Heart left ventricle (tissue), 16 donors: ENCODE measurements at regions of chr1 and their contacts with region 1.

Region 1: DNA sequence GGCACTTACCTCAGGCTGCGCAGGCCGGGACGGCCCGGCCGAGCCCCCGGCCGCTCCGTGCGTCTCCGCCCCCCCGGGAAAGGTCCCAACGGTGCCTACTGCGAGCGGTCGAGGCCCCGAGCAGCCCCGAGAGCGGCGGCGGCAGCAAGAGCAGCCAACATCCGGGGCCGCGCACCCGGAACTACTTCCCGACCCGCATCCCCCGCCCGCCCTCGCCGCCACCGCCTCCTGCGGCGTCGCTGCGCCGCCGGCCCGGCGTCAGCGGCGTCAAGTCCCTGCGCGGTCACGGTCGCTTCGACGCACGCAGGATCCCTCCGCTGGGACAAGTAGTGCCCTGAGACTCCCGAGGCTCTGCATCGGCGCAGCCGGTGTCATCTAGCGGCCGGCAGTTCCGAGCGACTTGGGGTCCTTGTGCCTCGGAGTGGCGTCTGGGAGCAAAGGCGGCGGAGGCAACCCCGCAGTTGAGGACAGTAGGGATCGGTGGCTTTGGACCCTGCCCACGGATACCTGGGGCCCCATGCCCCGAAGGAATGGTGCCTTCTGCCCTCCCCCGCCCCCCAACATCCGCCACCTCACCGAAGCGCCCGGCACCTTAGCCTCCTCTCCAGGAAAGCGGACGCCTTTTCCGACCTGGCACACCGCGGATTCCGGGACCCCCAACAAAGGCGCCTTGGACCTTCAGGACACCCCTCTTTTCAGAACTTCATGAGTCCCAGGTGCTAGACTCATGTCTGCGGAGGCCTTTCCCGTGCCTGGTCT is at the start of gene FOXJ3:
- DNase-seq: peak; percentile 94 to 97 (median 95)
- ATAC-seq: peak; percentile 74 to 96 (median 91)
- H3K4me3 ChIP-seq: peak within 1 kb of the TSS; percentile 72 to 99 (median 94)
- H3K27ac ChIP-seq: peak within 1 kb of the TSS; percentile 83 to 98 (median 95)
- H3K4me1 ChIP-seq: peaks cover 3 to 57% (median 30%) of the 10 kb centered on the region in 12 donors
- H3K27me3 ChIP-seq: no peaks in the 10 kb centered on the region
- CTCF ChIP-seq: no peak
- POLR2A ChIP-seq: peak in 1 of 2 donors; percentile 61
- total RNA-seq, gene FOXJ3: 33.4 to 48.8 (median 42.3) TPM

Region 2: GRCh38 chr1:42173155-42173933 is 161.9 kb before region 1 on chr1:
- intact Hi-C with region 1: loop called in 9 of 10 experiments (anchors 2 to 10 kb)
- DNase-seq: peak; percentile 58 to 80 (median 70)
- ATAC-seq: peak; percentile 42 to 63 (median 54)
- H3K4me3 ChIP-seq: no peak overlapping the region
- H3K27ac ChIP-seq: peak overlapping the region; percentile 63 to 95 (median 86)
- H3K4me1 ChIP-seq: peaks cover 8 to 48% (median 37%) of the 10 kb centered on the region in 12 donors
- H3K27me3 ChIP-seq: no peaks in the 10 kb centered on the region
- CTCF ChIP-seq: peak; percentile 91 to 99 (median 98)
- POLR2A ChIP-seq: no peak

Region 3: GRCh38 chr1:42462828-42463763 is 127.9 kb after region 1 on chr1 and contains the start of gene CCDC30:
- intact Hi-C with region 1: loop called in 6 of 10 experiments (anchors 5 to 10 kb)
- DNase-seq: peak; percentile 94 to 96 (median 95)
- ATAC-seq: peak; percentile 100
- H3K4me3 ChIP-seq: peak within 1 kb of the TSS; percentile 41 to 79 (median 64)
- H3K27ac ChIP-seq: peak within 1 kb of the TSS in 4 of 12 donors; percentile 1 to 6 (median 2)
- H3K4me1 ChIP-seq: peaks cover 0 to 24% (median 12%) of the 10 kb centered on the region in 12 donors
- H3K27me3 ChIP-seq: no peaks in the 10 kb centered on the region
- CTCF ChIP-seq: no peak
- POLR2A ChIP-seq: no peak
- total RNA-seq, gene CCDC30: 0.24 to 3.8 (median 2.0) TPM

Region 4: DNA sequence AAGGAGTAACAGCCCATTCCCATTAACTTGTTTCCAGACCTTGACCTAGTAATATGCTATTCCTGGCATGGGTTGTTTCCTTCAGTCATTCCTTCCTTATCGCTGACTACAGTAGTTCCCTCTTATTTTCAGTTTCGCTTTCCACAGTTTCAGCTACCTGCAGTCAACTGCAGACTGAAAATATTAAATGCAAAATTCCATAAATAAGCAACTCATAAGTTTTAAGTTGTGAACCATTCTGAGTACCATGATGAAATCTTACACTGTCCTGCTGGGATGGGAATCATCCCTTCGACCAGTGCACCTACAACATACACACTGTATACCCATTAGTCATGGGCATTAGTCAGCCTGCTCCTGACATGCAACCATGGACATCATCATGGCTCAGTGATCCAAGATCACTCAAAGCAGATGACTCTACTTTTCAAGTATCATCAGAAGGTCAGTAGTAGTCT is 194.5 kb after region 1 on chr1:
- intact Hi-C with region 1: no loop called
- DNase-seq: no peak
- ATAC-seq: no peak
- H3K4me3 ChIP-seq: peak overlapping the region in 3 of 12 donors; percentile 9 to 35 (median 34)
- H3K27ac ChIP-seq: no peak overlapping the region
- H3K4me1 ChIP-seq: peaks cover 0 to 10% (median 0%) of the 10 kb centered on the region in 12 donors
- H3K27me3 ChIP-seq: no peaks in the 10 kb centered on the region
- CTCF ChIP-seq: no peak
- POLR2A ChIP-seq: no peak

Region 5: GRCh38 chr1:42669936-42670335 is 334.7 kb after region 1 on chr1:
- intact Hi-C with region 1: no loop called
- DNase-seq: no peak
- ATAC-seq: no peak
- H3K4me3 ChIP-seq: no peak overlapping the region
- H3K27ac ChIP-seq: no peak overlapping the region
- H3K4me1 ChIP-seq: peaks cover 0 to 12% (median 3%) of the 10 kb centered on the region in 12 donors
- H3K27me3 ChIP-seq: no peaks in the 10 kb centered on the region
- CTCF ChIP-seq: no peak
- POLR2A ChIP-seq: no peak

Region 6: DNA sequence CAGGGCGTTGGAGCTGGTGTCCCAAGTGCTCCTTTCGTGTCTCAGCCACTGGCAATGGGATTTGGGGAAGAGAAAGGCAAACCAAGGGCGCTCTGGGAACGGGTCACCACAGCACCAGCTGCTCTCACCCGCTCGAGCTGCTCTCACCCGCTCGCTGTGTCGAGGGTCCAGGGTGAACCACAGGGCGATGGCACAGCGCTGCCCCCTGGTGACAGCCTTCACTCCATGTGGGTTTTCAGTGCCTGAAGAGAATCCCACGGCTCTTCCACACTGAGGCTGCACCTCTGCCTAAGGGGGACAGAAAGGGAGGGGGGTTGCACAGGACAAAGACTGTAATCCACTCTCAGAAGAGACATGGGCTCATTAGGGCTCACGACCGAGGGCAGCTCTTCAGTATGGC is 411.9 kb after region 1 on chr1:
- intact Hi-C with region 1: loop called in 6 of 10 experiments (anchors 10 kb)
- DNase-seq: peak in 2 of 5 donors; percentile 49 to 55
- ATAC-seq: peak in 3 of 4 donors; percentile 65 to 70 (median 68)
- H3K4me3 ChIP-seq: no peak overlapping the region
- H3K27ac ChIP-seq: no peak overlapping the region
- H3K4me1 ChIP-seq: peaks cover 0 to 19% (median 0%) of the 10 kb centered on the region in 12 donors
- H3K27me3 ChIP-seq: no peaks in the 10 kb centered on the region
- CTCF ChIP-seq: peak; percentile 47 to 72 (median 60)
- POLR2A ChIP-seq: no peak

Region 7: DNA sequence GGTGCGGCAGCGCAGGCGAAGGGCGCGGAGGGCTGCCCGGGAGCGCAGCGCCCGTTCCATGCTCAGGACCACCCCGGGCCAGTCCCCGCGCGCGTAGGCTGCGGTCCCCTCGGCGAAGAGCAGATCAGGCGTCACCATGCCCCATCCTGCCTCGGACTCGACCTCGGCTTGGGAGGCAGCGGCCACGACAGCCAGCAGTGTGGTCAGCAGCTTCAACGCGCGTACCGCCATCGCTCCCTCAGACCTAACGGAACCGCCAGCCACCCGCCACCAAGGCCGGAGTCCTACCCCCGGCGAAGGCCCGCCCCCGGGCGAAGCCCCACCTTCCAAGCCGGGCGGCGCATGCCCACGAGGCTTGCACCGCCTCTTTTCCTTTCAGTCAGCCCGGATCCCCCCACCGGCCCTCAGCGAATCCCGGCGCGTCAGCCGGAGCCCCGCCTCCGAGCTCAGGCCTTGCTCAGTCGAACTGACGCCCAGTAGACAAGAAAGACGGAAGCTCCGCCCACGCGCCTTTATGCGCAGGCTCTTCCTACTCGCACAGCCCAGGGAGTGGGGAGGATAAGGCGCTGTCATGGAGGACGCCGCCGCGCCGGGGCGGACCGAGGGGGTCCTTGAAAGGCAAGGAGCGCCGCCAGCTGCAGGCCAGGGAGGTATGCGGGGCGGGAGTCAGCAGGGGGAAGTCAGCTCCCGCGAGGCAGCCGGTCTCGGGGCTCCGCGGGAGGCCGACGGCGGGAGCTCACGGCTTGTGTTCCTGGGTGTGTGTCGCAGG is 431.7 kb after region 1 on chr1 and contains the starts of genes C1orf50 and P3H1:
- intact Hi-C with region 1: loop called in 1 of 10 experiments (anchors 10 kb)
- DNase-seq: peak; percentile 100
- ATAC-seq: peak; percentile 96 to 99 (median 98)
- H3K4me3 ChIP-seq: peak within 1 kb of the TSS; percentile 82 to 98 (median 94)
- H3K27ac ChIP-seq: peak within 1 kb of the TSS; percentile 72 to 97 (median 92)
- H3K4me1 ChIP-seq: peaks cover 3 to 47% (median 30%) of the 10 kb centered on the region in 12 donors
- H3K27me3 ChIP-seq: no peaks in the 10 kb centered on the region
- CTCF ChIP-seq: peak in 1 of 12 donors; percentile 10
- POLR2A ChIP-seq: peak; percentile 98 to 99
- total RNA-seq, gene C1orf50: 3.0 to 9.2 (median 5.8) TPM
- total RNA-seq, gene P3H1: 6.9 to 27.9 (median 10.0) TPM